Naive thymus-derived CD8-positive, alpha-beta T cell (primary cell): ENCODE measurements at regions of chr9 and their contacts with region 1.

Region 1: DNA sequence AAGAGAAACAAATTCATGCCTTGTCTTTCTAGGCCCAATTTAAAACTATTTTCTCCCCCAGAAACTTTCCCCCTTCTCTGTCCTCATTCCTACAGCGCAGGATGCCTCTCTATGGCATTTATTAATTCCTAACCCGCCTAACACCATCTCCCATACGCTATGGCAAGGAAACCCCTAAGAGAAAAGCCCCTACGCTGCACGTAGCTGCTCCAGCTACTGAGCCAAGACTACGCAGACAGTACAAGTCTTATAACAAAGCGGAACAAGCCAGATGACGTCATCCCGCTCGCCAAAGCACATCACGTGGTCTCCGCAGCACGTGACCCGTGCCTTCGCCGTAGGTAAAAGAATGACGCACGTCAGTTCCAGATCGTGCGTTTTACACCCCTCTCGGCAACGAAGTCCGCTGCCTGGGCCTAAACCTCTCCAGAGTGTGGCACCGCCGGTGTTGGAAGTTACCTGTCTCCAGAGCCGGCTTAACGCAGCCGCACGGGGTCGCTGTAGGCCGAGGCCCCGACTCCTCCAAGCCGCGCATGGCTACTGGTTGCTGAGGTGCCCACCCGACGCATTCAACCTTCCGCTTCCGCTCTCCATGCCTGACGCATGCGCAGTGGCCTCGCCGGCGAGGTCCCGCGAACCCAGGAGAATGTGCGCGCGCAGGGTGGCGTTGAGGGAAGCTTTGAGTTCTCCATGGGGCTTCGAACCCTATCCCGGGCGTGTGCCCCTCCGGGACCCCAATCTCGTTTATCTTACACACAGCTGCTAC is at the start of gene TRMO:
- DNase-seq: peak; percentile 97 to 99 (median 98)
- ATAC-seq: peak; percentile 75 to 79
- H3K4me3 Mint-ChIP-seq: peak within 1 kb of the TSS; percentile 86 to 95 (median 94)
- H3K27ac Mint-ChIP-seq: peak within 1 kb of the TSS; percentile 98 to 99 (median 99)
- H3K4me1 Mint-ChIP-seq: peaks cover 25 to 63% (median 51%) of the 10 kb centered on the region in 4 donors
- H3K27me3 Mint-ChIP-seq: peaks cover 0 to 5% (median 0%) of the 10 kb centered on the region in 5 donors
- polyA plus RNA-seq, gene TRMO: 11.7 to 18.0 (median 13.8) TPM

Region 2: GRCh38 chr9:97632985-97633858 is 288.9 kb before region 1 on chr9 and contains the starts of genes NCBP1 and TSTD2:
- POLR2A ChIA-PET with region 1: interaction called, 12 read pairs
- DNase-seq: peak; percentile 89 to 98 (median 96)
- ATAC-seq: peak; percentile 87 to 90
- H3K4me3 Mint-ChIP-seq: peak within 1 kb of the TSS; percentile 90 to 100 (median 98)
- H3K27ac Mint-ChIP-seq: peak within 1 kb of the TSS; percentile 95 to 100 (median 99)
- H3K4me1 Mint-ChIP-seq: peaks cover 40 to 77% (median 61%) of the 10 kb centered on the region in 4 donors
- H3K27me3 Mint-ChIP-seq: no peaks in the 10 kb centered on the region
- polyA plus RNA-seq, gene NCBP1: 17.9 to 19.7 (median 18.1) TPM
- polyA plus RNA-seq, gene TSTD2: 7.0 to 8.9 (median 7.3) TPM

Region 3: GRCh38 chr9:97768736-97769135 is 153.4 kb before region 1 on chr9:
- POLR2A ChIA-PET with region 1: no interaction called
- DNase-seq: no peak
- ATAC-seq: no peak
- H3K4me3 Mint-ChIP-seq: no peak overlapping the region
- H3K27ac Mint-ChIP-seq: no peak overlapping the region
- H3K4me1 Mint-ChIP-seq: peaks cover 0 to 2% (median under 1%) of the 10 kb centered on the region in 4 donors
- H3K27me3 Mint-ChIP-seq: peaks cover 9 to 50% (median 18%) of the 10 kb centered on the region in 5 donors

Region 4: GRCh38 chr9:97811527-97812246 is 110.5 kb before region 1 on chr9:
- POLR2A ChIA-PET with region 1: no interaction called
- DNase-seq: no peak
- ATAC-seq: no peak
- H3K4me3 Mint-ChIP-seq: no peak overlapping the region
- H3K27ac Mint-ChIP-seq: no peak overlapping the region
- H3K4me1 Mint-ChIP-seq: no peaks in the 10 kb centered on the region
- H3K27me3 Mint-ChIP-seq: peaks cover 0 to 18% (median 8%) of the 10 kb centered on the region in 5 donors

Region 5: DNA sequence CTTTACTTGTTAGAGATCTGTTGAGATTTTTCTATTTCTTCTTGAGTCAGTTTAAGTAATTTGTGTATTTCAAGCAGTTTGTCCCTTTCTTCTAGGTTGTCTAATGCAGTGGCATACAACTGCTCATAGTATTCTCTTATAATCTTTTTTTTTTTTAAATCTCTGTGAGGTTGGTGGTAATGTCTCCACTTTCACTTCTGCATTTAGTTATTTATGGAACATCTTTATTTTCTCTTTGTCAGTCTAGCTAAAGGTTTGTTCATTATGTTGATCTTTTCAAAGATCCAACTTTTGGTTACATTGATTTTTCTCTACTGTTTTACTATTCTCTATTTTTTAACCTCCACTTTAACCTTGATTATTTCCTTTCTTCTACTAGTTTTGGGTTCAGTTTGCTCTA is 55.3 kb before region 1 on chr9:
- POLR2A ChIA-PET with region 1: no interaction called
- DNase-seq: no peak
- ATAC-seq: no peak
- H3K4me3 Mint-ChIP-seq: no peak overlapping the region
- H3K27ac Mint-ChIP-seq: no peak overlapping the region
- H3K4me1 Mint-ChIP-seq: peaks cover 0 to 3% (median 0%) of the 10 kb centered on the region in 4 donors
- H3K27me3 Mint-ChIP-seq: peaks cover 12 to 57% (median 35%) of the 10 kb centered on the region in 5 donors

Region 6: DNA sequence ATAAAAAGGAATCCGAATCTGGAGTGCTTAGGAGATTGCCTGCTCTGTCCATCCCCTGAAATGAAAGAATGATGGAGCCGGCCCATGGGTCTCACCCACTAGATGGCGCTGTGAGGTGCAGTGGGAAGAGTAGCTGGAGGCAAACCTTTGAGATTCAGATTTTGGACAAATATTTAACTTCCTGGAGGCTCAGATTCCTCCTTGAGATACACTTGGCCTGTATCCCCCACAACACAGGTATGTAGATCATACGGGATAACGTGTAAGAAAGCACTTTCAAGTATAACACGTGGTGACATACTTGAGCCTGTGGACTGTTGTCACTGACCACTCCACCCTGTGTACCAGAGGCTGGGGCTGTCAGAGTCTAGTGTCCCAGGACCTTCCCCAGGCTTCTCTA is 32.1 kb before region 1 on chr9:
- POLR2A ChIA-PET with region 1: interaction called, 39 read pairs
- DNase-seq: peak; percentile 17 to 78 (median 58)
- ATAC-seq: peak; percentile 60 to 74
- H3K4me3 Mint-ChIP-seq: no peak overlapping the region
- H3K27ac Mint-ChIP-seq: peak overlapping the region in 6 of 10 donors; percentile 30 to 68 (median 63)
- H3K4me1 Mint-ChIP-seq: peaks cover 3 to 14% (median 8%) of the 10 kb centered on the region in 4 donors
- H3K27me3 Mint-ChIP-seq: no peaks in the 10 kb centered on the region

Region 7: GRCh38 chr9:97954550-97954989 is 32.4 kb after region 1 on chr9:
- POLR2A ChIA-PET with region 1: interaction called, 52 read pairs
- DNase-seq: peak in 9 of 10 donors; percentile 36 to 81 (median 58)
- ATAC-seq: peak; percentile 93 to 100
- H3K4me3 Mint-ChIP-seq: no peak overlapping the region
- H3K27ac Mint-ChIP-seq: peak overlapping the region in 2 of 10 donors; percentile 8 to 56
- H3K4me1 Mint-ChIP-seq: peaks cover 0 to 12% (median 4%) of the 10 kb centered on the region in 4 donors
- H3K27me3 Mint-ChIP-seq: peaks cover 0 to 4% (median 0%) of the 10 kb centered on the region in 5 donors

Region 8: GRCh38 chr9:98045234-98046179 is 123.4 kb after region 1 on chr9:
- POLR2A ChIA-PET with region 1: interaction called, 13 read pairs
- DNase-seq: peak in 9 of 10 donors; percentile 9 to 80 (median 55)
- ATAC-seq: peak; percentile 97 to 98
- H3K4me3 Mint-ChIP-seq: peak overlapping the region; percentile 77 to 88 (median 82)
- H3K27ac Mint-ChIP-seq: peak overlapping the region; percentile 86 to 100 (median 93)
- H3K4me1 Mint-ChIP-seq: peaks cover 18 to 51% (median 31%) of the 10 kb centered on the region in 4 donors
- H3K27me3 Mint-ChIP-seq: peaks cover 0 to 5% (median 0%) of the 10 kb centered on the region in 5 donors

Region 9: GRCh38 chr9:98108531-98109031 is 186.4 kb after region 1 on chr9:
- POLR2A ChIA-PET with region 1: interaction called, 12 read pairs
- DNase-seq: peak in 7 of 10 donors; percentile 13 to 73 (median 53)
- ATAC-seq: peak; percentile 90 to 96
- H3K4me3 Mint-ChIP-seq: peak overlapping the region; percentile 58 to 84 (median 76)
- H3K27ac Mint-ChIP-seq: peak overlapping the region; percentile 93 to 99 (median 98)
- H3K4me1 Mint-ChIP-seq: peaks cover 34 to 91% (median 78%) of the 10 kb centered on the region in 4 donors
- H3K27me3 Mint-ChIP-seq: no peaks in the 10 kb centered on the region